GM12878 (cell line): ENCODE measurements at regions of chr17 and their contacts with region 1.

Region 1: GRCh38 chr17:59859444-59860025 is 33.2 kb downstream of the TUBD1 start:
- DNase-seq: no peak
- ATAC-seq: peak; percentile 84
- H3K4me3 ChIP-seq: no peak overlapping the region
- H3K27ac ChIP-seq: no peak overlapping the region
- H3K4me1 ChIP-seq: no peaks in the 10 kb centered on the region
- H3K27me3 ChIP-seq: no peaks in the 10 kb centered on the region
- CTCF ChIP-seq: peak; percentile 47 to 73 (median 48); a peak in 5 of 6 replicates
- EP300 ChIP-seq: no peak
- POLR2A ChIP-seq: no peak
- RAD21 ChIP-seq: peak; percentile 95

Region 2: GRCh38 chr17:59521204-59522126 is 338.1 kb before region 1 on chr17:
- CTCF ChIA-PET with region 1: interaction called, 4 read pairs
- POLR2A ChIA-PET with region 1: no interaction called
- RAD21 ChIA-PET with region 1: interaction called, 12 read pairs
- SMC1A ChIA-PET with region 1: interaction called, 10 read pairs
- in situ Hi-C with region 1: no loop called
- intact Hi-C with region 1: no loop called
- DNase-seq: peak; percentile 19
- ATAC-seq: peak; percentile 91
- H3K4me3 ChIP-seq: no peak overlapping the region
- H3K27ac ChIP-seq: no peak overlapping the region
- H3K4me1 ChIP-seq: no peaks in the 10 kb centered on the region
- H3K27me3 ChIP-seq: peaks cover 0 to 2% of the 10 kb centered on the region in 2 experiments; a peak in 1 of 4 replicates
- CTCF ChIP-seq: peak; percentile 83 to 94 (median 90)
- EP300 ChIP-seq: no peak
- POLR2A ChIP-seq: no peak
- RAD21 ChIP-seq: peak; percentile 84

Region 3: DNA sequence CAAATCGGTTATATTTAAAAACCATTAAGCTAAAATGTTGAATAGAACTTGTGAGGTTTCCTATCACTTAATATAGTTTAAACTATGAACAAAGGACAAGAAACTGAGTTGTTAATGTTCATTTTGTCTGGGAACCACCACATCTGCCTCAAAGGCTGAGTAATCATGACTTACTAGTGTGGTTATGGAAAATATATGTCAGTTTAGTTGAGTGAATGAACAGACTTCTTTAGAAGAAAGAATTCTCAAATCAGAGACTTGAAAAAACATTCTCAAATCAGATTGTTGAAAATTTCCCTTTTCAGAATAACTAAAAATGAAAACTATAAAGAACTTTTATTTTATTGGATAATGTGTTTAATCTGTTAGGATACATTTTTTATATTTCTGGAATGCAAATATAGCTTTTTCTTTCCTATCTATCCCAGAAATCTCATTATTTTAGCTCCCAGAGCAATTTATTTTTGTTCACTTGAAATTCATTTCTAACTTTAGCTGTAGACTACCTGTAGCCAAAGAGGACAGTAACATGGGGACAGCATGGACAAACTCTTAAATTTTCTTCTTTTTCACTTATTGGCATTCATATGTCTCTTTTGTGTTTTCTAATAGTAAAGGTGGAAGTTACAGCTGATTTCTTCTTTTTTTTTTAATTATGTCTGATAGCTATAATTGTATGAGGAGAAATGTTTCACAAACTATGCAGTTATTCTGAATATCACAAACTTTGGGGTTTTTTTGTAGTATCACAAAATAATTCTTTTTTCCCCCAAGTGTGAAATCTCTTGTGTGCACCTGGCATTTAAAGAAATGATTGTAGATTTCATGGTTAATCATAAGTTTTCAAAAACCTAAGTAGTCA is 96.8 kb before region 1 on chr17:
- CTCF ChIA-PET with region 1: interaction called, 10 read pairs
- POLR2A ChIA-PET with region 1: interaction called, 5 read pairs
- RAD21 ChIA-PET with region 1: interaction called, 6 read pairs
- SMC1A ChIA-PET with region 1: interaction called, 18 read pairs
- in situ Hi-C with region 1: no loop called
- intact Hi-C with region 1: no loop called
- DNase-seq: no peak
- ATAC-seq: peak; percentile 85
- H3K4me3 ChIP-seq: no peak overlapping the region
- H3K27ac ChIP-seq: peak overlapping the region; percentile 47
- H3K4me1 ChIP-seq: peaks cover 4% of the 10 kb centered on the region; the same call in 1 of the 2 replicates
- H3K27me3 ChIP-seq: no peaks in the 10 kb centered on the region
- CTCF ChIP-seq: no peak
- EP300 ChIP-seq: 0 out of 4 replicates have a peak, but pooled peaks of 1 of the 2 experiments have one; percentile 29
- POLR2A ChIP-seq: no peak
- RAD21 ChIP-seq: no peak

Region 4: DNA sequence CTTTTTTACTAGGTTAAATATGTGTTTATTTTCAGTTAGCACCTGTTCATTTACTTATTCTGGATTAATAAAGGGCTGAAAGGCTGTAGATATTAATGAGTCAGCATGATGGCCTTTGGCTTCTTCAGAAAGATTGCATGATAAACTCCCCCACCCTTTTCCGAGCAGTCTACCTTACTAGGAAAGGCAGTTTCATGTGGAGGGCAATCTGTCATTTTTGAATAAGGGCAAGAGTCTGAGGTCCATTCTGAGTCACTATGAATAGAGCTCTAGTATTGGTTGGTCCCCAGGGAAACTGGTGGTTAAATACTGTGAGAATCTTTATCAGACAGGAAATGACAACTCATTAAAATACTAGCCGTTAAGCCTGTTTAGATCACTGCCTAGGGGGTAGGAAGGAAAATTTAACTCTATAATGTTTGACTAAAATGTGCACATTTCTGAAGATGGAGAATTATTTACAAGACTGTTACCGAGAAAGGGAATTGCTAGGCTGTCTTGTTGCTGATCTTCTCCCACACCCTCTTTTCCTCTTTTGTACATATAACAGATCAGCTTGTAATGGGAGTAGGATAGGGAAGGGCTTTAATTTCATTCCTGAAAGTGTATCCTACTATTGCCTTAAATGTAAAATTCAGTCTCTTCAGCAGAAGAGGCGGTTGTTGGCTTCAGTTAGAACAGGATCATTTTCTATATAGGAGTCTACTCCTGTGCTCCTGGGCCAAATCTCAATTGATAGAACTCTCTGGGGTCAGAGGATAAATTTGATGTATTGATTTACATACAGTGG is 30.1 kb before region 1 on chr17:
- CTCF ChIA-PET with region 1: interaction called, 11 read pairs
- POLR2A ChIA-PET with region 1: interaction called, 9 read pairs
- RAD21 ChIA-PET with region 1: interaction called, 11 read pairs
- SMC1A ChIA-PET with region 1: interaction called, 10 read pairs
- in situ Hi-C with region 1: no loop called
- intact Hi-C with region 1: no loop called
- DNase-seq: peak; percentile 100
- ATAC-seq: peak; percentile 71
- H3K4me3 ChIP-seq: peak overlapping the region; percentile 65
- H3K27ac ChIP-seq: peak overlapping the region; percentile 98
- H3K4me1 ChIP-seq: peaks cover 88% of the 10 kb centered on the region
- H3K27me3 ChIP-seq: no peaks in the 10 kb centered on the region
- CTCF ChIP-seq: no peak
- EP300 ChIP-seq: peak; percentile 97 to 99
- POLR2A ChIP-seq: peak; percentile 42; the same call in 1 of the 2 replicates
- RAD21 ChIP-seq: peak; percentile 18; the same call in 1 of the 2 replicates

Region 5: GRCh38 chr17:59914274-59914854 is 54.8 kb after region 1 on chr17:
- CTCF ChIA-PET with region 1: interaction called, 10 read pairs
- POLR2A ChIA-PET with region 1: no interaction called
- RAD21 ChIA-PET with region 1: interaction called, 4 read pairs
- SMC1A ChIA-PET with region 1: interaction called, 3 read pairs
- in situ Hi-C with region 1: no loop called
- intact Hi-C with region 1: no loop called
- DNase-seq: no peak
- ATAC-seq: peak; percentile 77
- H3K4me3 ChIP-seq: no peak overlapping the region
- H3K27ac ChIP-seq: no peak overlapping the region
- H3K4me1 ChIP-seq: no peaks in the 10 kb centered on the region
- H3K27me3 ChIP-seq: no peaks in the 10 kb centered on the region
- CTCF ChIP-seq: peak; percentile 42 to 54 (median 47); a peak in 5 of 6 replicates
- EP300 ChIP-seq: no peak
- POLR2A ChIP-seq: no peak
- RAD21 ChIP-seq: peak; percentile 53

Region 6: GRCh38 chr17:60065136-60065535 is 205.6 kb after region 1 on chr17:
- CTCF ChIA-PET with region 1: no interaction called
- POLR2A ChIA-PET with region 1: no interaction called
- RAD21 ChIA-PET with region 1: no interaction called
- SMC1A ChIA-PET with region 1: no interaction called
- in situ Hi-C with region 1: no loop called
- intact Hi-C with region 1: no loop called
- DNase-seq: no peak
- ATAC-seq: no peak
- H3K4me3 ChIP-seq: no peak overlapping the region
- H3K27ac ChIP-seq: no peak overlapping the region
- H3K4me1 ChIP-seq: no peaks in the 10 kb centered on the region
- H3K27me3 ChIP-seq: no peaks in the 10 kb centered on the region
- CTCF ChIP-seq: no peak
- EP300 ChIP-seq: no peak
- POLR2A ChIP-seq: no peak
- RAD21 ChIP-seq: no peak